ENCODE measurements at regions of chr20 and their contacts with region 1.

Region 1: GRCh38 chr20:31661625-31662371 is 24.1 kb downstream of the COX4I2 start:
- DNase-seq: peak; percentile 67 to 96
- H3K4me3 ChIP-seq: no peak overlapping the region
- CTCF ChIP-seq: no peak
- POLR2A ChIP-seq: no peak

Region 2: GRCh38 chr20:31608256-31608980 is 53.4 kb before region 1 on chr20:
- intact Hi-C with region 1: no loop called
- DNase-seq: peak; percentile 65 to 94
- H3K4me3 ChIP-seq: no peak overlapping the region
- CTCF ChIP-seq: peak in 1 of 3 donors; percentile 100
- POLR2A ChIP-seq: no peak

Region 3: DNA sequence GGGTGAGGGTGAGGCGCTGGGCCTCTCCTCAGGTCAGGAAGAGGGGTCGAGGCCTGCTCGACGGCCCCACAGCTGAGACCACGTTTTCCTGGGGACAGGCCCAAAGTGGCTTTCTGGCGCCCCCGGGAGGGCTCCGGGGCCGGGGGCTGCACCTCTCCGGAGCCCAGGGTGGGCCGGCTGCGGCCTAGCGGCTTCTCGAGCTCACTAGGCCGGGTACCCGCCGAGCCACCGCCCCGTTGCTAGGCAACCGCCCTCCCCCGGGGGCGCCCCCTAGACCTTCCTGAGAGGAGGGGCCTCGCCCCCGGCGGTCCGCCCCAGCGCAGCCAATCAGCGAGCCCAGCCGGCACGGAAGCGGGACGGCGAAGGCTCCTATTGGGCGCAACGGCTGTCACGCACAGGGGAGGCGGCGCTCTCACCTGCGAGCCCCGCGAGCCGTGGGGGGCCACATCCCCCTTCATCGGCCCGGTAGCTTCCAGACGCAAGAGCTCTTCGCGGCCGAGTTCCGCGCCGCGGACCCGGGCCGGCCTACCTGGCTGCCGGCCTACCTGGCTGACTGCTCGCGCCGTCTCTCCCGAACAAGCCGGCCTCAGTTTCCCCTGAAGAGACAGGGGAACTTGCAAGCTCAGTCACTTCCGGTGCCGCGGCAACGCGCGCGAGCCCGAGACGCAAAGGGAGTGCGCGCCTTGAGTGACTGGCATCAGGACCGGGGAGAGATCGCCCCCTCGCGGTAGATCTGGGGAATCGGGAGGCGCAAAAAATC is 61.7 kb after region 1 on chr20:
- intact Hi-C with region 1: loop called (anchors 5 kb)
- DNase-seq: peak; percentile 95 to 99
- H3K4me3 ChIP-seq: peak overlapping the region; percentile 74
- CTCF ChIP-seq: peak in 1 of 3 donors; percentile 91
- POLR2A ChIP-seq: peak in 1 of 2 donors; percentile 12

Measured in lower leg skin (tissue), 4 donors.